ENCODE measurements at regions of chr19 and their contacts with region 1.

Region 1: GRCh38 chr19:58543826-58544590 is at the start of gene TRIM28:
- DNase-seq: peak; percentile 99 to 100 (median 100)
- ATAC-seq: peak; percentile 85
- H3K4me3 ChIP-seq: peak within 1 kb of the TSS; percentile 68 to 71
- H3K4me3 Mint-ChIP-seq: peak within 1 kb of the TSS; percentile 93
- H3K27ac ChIP-seq: peak within 1 kb of the TSS; percentile 90 to 93
- H3K27ac Mint-ChIP-seq: peak within 1 kb of the TSS; percentile 99
- H3K4me1 ChIP-seq: peaks cover 17% of the 10 kb centered on the region
- H3K4me1 Mint-ChIP-seq: peaks cover 24% of the 10 kb centered on the region
- H3K27me3 ChIP-seq: peaks cover 0 to 13% of the 10 kb centered on the region in 2 experiments
- H3K27me3 Mint-ChIP-seq: peaks cover 10% of the 10 kb centered on the region
- CTCF ChIP-seq: no peak
- total RNA-seq, gene TRIM28: 525 to 549 TPM

Region 2: GRCh38 chr19:58386576-58387337 is 157.3 kb before region 1 on chr19 and contains the start of gene RPS5:
- CTCF ChIA-PET with region 1: no interaction called
- POLR2A ChIA-PET with region 1: no interaction called
- intact Hi-C with region 1: loop called in 1 of 2 experiments (anchors 1 kb)
- DNase-seq: peak; percentile 92 to 100 (median 95)
- ATAC-seq: peak; percentile 88
- H3K4me3 ChIP-seq: peak within 1 kb of the TSS; percentile 88 to 90
- H3K4me3 Mint-ChIP-seq: peak within 1 kb of the TSS; percentile 93
- H3K27ac ChIP-seq: peak within 1 kb of the TSS; percentile 94 to 98
- H3K27ac Mint-ChIP-seq: peak within 1 kb of the TSS; percentile 99
- H3K4me1 ChIP-seq: peaks cover 41% of the 10 kb centered on the region
- H3K4me1 Mint-ChIP-seq: peaks cover 52% of the 10 kb centered on the region
- H3K27me3 ChIP-seq: no peaks in the 10 kb centered on the region
- H3K27me3 Mint-ChIP-seq: no peaks in the 10 kb centered on the region
- CTCF ChIP-seq: no peak
- total RNA-seq, gene RPS5: 1,884 to 1,887 TPM

Region 3: GRCh38 chr19:58466760-58467589 is 77.0 kb before region 1 on chr19 and contains the start of gene ZNF324:
- CTCF ChIA-PET with region 1: no interaction called
- POLR2A ChIA-PET with region 1: no interaction called
- intact Hi-C with region 1: loop called in 1 of 2 experiments (anchors 2 kb)
- DNase-seq: peak; percentile 93 to 99 (median 98)
- ATAC-seq: peak; percentile 88
- H3K4me3 ChIP-seq: peak within 1 kb of the TSS; percentile 63 to 93
- H3K4me3 Mint-ChIP-seq: peak within 1 kb of the TSS; percentile 87
- H3K27ac ChIP-seq: peak within 1 kb of the TSS; percentile 88 to 91
- H3K27ac Mint-ChIP-seq: peak within 1 kb of the TSS; percentile 89
- H3K4me1 ChIP-seq: peaks cover 10% of the 10 kb centered on the region
- H3K4me1 Mint-ChIP-seq: peaks cover 25% of the 10 kb centered on the region
- H3K27me3 ChIP-seq: peaks cover 0 to 3% of the 10 kb centered on the region in 2 experiments
- H3K27me3 Mint-ChIP-seq: no peaks in the 10 kb centered on the region
- CTCF ChIP-seq: no peak
- total RNA-seq, gene ZNF324: 26.9 to 30.5 TPM

Region 4: GRCh38 chr19:58499021-58499927 is 44.7 kb before region 1 on chr19:
- CTCF ChIA-PET with region 1: no interaction called
- POLR2A ChIA-PET with region 1: interaction called, 7 read pairs
- intact Hi-C with region 1: loop called (anchors 1 kb)
- DNase-seq: peak; percentile 83 to 97 (median 95)
- ATAC-seq: peak; percentile 86
- H3K4me3 ChIP-seq: peak overlapping the region; percentile 64
- H3K4me3 Mint-ChIP-seq: peak overlapping the region; percentile 92
- H3K27ac ChIP-seq: peak overlapping the region; percentile 22 to 88
- H3K27ac Mint-ChIP-seq: peak overlapping the region; percentile 96
- H3K4me1 ChIP-seq: peaks cover 17% of the 10 kb centered on the region
- H3K4me1 Mint-ChIP-seq: peaks cover 25% of the 10 kb centered on the region
- H3K27me3 ChIP-seq: no peaks in the 10 kb centered on the region
- H3K27me3 Mint-ChIP-seq: no peaks in the 10 kb centered on the region
- CTCF ChIP-seq: no peak

Region 5: DNA sequence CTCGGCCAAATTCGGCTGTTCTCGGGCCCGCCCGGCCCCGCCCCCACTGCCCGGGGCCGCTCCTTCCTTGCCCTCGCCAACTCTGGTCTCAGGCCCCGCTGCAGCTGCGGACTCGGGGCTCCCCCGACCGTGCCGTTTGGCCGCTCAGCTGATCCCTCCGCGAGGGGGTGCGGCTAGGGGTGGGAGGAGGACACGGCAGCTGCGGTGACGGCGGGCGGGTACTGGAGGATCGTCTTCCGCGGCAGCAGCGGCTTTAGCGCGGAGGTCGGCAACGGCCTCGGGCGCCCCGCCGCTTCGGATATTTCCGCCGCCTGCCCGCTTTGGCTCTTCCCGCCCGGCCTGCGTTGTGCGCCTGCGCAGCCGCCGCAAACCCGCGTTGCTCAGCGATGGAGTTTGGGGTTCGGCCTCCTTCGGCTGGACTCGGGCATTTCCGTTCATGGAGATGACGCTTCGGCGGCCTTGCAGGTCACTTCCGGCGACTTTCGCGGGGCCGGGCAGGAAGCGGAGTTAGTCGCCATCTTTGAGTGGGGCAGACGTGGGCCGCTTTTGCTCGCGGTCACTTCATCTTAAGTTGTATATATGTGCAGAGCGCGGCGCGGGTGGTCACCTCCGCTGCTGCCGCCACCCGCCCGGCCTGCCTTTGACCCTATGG is 14.7 kb after region 1 on chr19:
- CTCF ChIA-PET with region 1: interaction called, 5 read pairs
- POLR2A ChIA-PET with region 1: interaction called, 43 read pairs
- intact Hi-C with region 1: loop called (anchors 1 kb)
- DNase-seq: peak; percentile 99 to 100 (median 100)
- ATAC-seq: peak; percentile 69
- H3K4me3 ChIP-seq: peak overlapping the region; percentile 61 to 96
- H3K4me3 Mint-ChIP-seq: peak overlapping the region; percentile 97
- H3K27ac ChIP-seq: peak overlapping the region; percentile 88 to 91
- H3K27ac Mint-ChIP-seq: peak overlapping the region; percentile 98
- H3K4me1 ChIP-seq: peaks cover 60% of the 10 kb centered on the region
- H3K4me1 Mint-ChIP-seq: peaks cover 72% of the 10 kb centered on the region
- H3K27me3 ChIP-seq: no peaks in the 10 kb centered on the region
- H3K27me3 Mint-ChIP-seq: no peaks in the 10 kb centered on the region
- CTCF ChIP-seq: no peak

Region 6: DNA sequence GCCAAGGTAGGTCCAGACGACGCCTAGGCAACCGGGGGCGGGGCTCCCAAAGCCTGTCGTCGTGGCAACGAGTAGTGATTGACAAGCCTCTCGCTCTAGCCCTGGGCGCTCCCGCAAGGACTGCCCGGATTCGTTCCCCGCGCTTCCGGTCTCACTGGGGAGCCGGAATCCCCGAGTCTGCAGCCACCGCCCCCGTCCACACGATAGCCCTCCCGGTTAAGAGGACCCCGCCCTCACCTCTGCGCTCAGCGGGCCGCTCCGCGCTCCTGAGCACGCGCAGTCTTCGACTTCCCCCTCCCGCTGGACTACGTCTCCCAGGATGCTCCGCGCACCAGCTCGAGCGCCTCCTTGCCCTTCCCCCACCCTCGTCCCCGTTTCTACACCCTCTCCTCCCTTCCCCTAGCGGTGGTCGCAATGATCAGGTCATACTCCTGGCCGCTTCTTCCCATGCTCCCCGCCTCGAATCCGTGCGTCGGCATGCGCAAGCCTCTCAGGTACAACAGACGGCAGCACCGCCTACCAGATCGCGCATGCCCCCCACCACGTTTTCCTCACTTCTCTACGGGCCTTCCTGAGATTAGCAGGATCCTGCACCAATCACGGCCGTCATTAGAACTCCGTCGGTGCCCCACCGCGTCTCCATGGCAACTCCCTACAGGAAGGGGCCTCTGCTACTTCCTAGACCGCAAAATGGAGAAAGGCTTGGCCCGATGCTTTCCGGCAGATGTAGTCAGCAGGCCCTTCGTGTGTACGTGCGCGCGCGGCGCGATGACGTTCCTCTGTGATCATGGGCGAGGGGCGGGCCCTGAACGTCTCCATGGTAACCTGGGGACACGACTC is 29.0 kb after region 1 on chr19 and contains the start of gene MZF1:
- CTCF ChIA-PET with region 1: no interaction called
- POLR2A ChIA-PET with region 1: interaction called, 11 read pairs
- intact Hi-C with region 1: loop called (anchors 1 kb)
- DNase-seq: peak; percentile 99 to 100 (median 99)
- ATAC-seq: peak; percentile 70
- H3K4me3 ChIP-seq: peak within 1 kb of the TSS; percentile 83 to 84
- H3K4me3 Mint-ChIP-seq: peak within 1 kb of the TSS; percentile 98
- H3K27ac ChIP-seq: peak within 1 kb of the TSS; percentile 98 to 100
- H3K27ac Mint-ChIP-seq: peak within 1 kb of the TSS; percentile 99
- H3K4me1 ChIP-seq: peaks cover 22% of the 10 kb centered on the region
- H3K4me1 Mint-ChIP-seq: peaks cover 30% of the 10 kb centered on the region
- H3K27me3 ChIP-seq: no peaks in the 10 kb centered on the region
- H3K27me3 Mint-ChIP-seq: no peaks in the 10 kb centered on the region
- CTCF ChIP-seq: no peak
- total RNA-seq, gene MZF1: 14.1 to 15.0 TPM

Measured in CD8-positive, alpha-beta T cell (primary cell).